ENCODE measurements at regions of chr5 and their contacts with region 1.

Region 1: DNA sequence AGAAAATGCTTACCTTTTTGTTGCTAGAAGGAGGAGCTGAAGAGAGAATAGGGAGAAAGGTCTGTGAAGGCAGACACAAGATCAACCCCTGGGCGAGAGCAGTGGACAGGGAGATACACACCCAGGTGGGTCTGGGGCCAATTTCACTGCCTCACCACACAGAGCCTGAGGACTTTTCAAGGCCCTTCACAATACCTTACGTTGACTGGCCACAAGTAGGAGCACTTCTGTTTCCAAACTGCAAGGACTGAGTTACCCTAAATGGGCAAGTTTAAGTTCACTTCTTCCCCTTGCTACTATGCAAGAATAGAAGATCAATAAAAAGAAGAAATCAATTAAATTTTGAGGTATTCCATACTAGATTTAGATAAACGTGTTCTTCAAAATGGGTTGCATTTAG is 174.5 kb upstream of the SLC12A2 start:
- DNase-seq: peak in 1 of 5 donors; percentile 22
- H3K4me3 ChIP-seq: no peak overlapping the region
- H3K4me3 Mint-ChIP-seq: no peak overlapping the region
- H3K27ac ChIP-seq: no peak overlapping the region
- H3K27ac Mint-ChIP-seq: no peak overlapping the region
- H3K4me1 ChIP-seq: no peaks in the 10 kb centered on the region
- H3K4me1 Mint-ChIP-seq: peaks cover 0 to 5% (median under 1%) of the 10 kb centered on the region in 4 donors
- H3K27me3 ChIP-seq: no peaks in the 10 kb centered on the region
- H3K27me3 Mint-ChIP-seq: peaks cover 1 to 3% of the 10 kb centered on the region in 2 donors

Region 2: DNA sequence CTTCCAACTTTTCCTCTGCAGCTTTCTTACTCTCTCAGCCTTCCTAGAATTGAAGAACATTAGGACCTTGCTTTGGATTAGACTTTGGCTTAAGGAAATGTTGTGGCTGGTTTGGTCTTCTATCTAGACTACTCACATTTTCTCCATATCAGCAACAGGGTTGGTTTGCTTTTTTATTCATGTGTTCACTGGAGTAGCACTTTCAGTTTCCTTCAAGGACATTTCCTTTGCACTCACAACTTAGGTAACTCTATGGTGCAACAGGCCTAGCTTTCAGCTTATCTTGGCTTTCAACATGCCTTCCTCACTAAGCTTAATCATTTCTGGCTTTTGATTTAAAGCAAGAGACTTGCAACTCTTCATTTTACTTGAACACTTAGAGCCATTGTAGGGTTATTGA is 52.8 kb before region 1 on chr5:
- CTCF ChIA-PET with region 1: no interaction called
- POLR2A ChIA-PET with region 1: no interaction called
- intact Hi-C with region 1: no loop called
- DNase-seq: no peak
- H3K4me3 ChIP-seq: no peak overlapping the region
- H3K4me3 Mint-ChIP-seq: no peak overlapping the region
- H3K27ac ChIP-seq: no peak overlapping the region
- H3K27ac Mint-ChIP-seq: no peak overlapping the region
- H3K4me1 ChIP-seq: no peaks in the 10 kb centered on the region
- H3K4me1 Mint-ChIP-seq: no peaks in the 10 kb centered on the region
- H3K27me3 ChIP-seq: no peaks in the 10 kb centered on the region
- H3K27me3 Mint-ChIP-seq: peaks cover 0 to 2% of the 10 kb centered on the region in 2 donors

Region 3: DNA sequence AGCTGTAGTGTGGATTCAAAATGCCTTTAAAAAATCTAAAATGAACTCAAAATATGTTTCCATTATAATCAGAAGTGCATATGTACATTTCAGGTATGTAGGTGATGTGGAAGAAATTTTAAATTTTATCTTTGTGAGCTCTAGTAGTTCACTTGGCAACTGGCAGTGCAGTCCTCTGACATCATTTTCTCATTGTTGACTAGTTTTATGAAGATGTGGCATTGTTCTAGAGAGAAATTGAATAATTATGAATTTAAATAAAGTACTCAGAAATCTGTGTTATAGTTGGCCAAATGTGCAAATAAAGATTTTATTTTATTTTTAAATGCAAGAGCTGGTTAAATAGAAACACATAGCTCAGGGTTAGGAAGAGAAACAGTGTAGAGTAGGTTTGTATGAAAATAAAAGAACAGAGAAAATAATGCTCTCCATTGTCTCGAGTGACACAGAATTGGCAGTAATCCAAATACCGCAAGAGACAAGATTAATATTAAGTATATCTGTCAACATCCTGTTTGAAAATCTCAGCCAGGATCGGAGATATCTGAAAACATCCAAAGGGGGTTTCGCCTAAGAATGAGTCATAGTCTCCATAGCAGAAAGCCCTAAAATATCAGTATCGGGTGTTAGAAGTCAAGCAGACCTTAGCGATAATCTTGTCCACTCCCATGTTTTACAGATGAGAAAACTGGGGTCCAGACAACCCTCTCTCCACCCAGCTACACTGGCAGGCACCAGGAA is 16.4 kb before region 1 on chr5:
- CTCF ChIA-PET with region 1: interaction called, 6 read pairs
- POLR2A ChIA-PET with region 1: no interaction called
- intact Hi-C with region 1: loop called (anchors 2 kb)
- DNase-seq: peak; percentile 28 to 60 (median 51)
- H3K4me3 ChIP-seq: no peak overlapping the region
- H3K4me3 Mint-ChIP-seq: peak overlapping the region; percentile 10 to 68 (median 38)
- H3K27ac ChIP-seq: peak overlapping the region; percentile 6
- H3K27ac Mint-ChIP-seq: peak overlapping the region in 6 of 7 donors; percentile 28 to 83 (median 69)
- H3K4me1 ChIP-seq: peaks cover 13% of the 10 kb centered on the region
- H3K4me1 Mint-ChIP-seq: peaks cover 9 to 21% (median 17%) of the 10 kb centered on the region in 4 donors
- H3K27me3 ChIP-seq: no peaks in the 10 kb centered on the region
- H3K27me3 Mint-ChIP-seq: peaks cover 0 to 2% of the 10 kb centered on the region in 2 donors

Measured in CD4-positive, alpha-beta memory T cell (primary cell).